Right ventricle myocardium inferior (tissue), 1 donor: ENCODE measurements at regions of chr4 and their contacts with region 1.

Region 1: DNA sequence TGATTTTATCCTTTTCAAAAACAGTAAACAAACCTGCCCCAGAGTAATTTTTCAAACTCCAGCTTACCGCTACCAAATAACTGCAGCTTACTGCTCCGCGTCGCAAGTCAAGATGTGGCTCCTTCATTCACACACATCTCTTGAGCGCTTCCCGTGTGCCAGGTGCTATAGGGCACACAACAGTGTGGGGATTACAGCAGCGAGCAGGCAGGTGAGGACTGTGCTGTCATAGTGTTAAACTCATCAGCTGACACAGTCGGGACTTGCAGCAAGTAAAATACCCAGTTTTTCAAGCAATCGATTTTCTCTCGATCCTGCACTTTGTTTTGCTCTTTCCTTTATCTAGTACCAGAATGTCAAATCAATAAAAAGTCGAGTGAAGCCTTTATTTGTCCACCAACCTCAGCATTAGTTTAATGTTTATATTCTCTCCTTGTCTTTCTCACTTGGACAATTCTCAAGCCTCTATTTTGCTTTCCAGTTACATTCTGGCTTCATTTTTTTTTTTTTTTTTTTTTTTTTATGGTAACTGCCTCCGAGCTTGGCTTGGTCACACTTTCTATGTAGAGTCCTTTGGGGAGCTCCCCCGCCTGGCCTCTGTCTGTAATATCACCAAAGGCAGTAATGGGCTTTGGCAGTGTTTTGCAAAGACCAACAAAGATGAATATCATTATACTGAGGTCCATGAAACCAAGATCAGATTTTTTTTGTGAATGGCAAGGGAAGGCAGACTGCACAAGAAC is 8.3 kb upstream of the ASB5 start:
- DNase-seq: no peak
- ATAC-seq: peak; percentile 79

Region 2: GRCh38 chr4:176150356-176150682 is 127.0 kb before region 1 on chr4:
- intact Hi-C with region 1: loop called (anchors 1 kb)
- DNase-seq: no peak
- ATAC-seq: no peak

Region 3: DNA sequence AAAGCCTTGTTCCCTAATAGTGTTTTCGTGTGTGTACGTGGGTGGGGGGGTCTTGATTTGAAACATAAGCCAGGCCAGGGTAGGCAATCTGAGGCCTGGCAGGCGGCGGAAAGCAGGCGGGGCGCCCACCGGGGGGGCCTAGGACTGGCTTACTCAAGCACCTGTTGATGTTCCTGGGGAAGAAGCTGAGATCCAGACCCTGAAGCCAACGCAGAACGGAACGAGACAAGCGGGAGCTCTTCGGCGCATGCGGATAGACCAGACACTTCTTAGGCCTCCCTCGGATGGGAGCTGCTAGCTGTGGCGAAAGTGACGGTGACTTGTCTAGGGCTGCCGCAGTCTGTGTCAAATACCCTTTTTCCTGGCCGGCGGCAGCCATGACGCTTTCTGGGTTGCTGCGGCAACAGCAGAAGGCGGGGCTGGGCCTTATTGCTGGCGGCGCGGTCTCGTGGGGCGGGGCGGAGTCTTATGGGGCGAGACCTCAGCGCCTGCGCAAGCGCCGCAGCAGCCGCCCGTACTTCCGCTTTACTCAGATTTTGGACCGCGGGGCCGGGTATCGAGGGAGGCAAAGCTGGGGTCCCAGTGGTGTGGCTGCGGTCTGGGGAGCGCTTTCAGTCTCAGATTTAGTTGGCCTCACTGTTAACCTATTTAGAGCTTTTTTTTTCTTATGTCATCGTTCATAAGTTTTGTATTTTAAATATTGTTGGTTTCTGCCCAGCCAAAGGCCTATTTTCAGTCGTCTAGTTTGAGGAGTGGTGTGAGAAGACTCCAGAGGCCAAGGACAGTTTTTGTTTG is 82.0 kb before region 1 on chr4 and contains the start of gene SPATA4:
- intact Hi-C with region 1: loop called (anchors 1 kb)
- DNase-seq: peak; percentile 98
- ATAC-seq: peak; percentile 100
- total RNA-seq, gene SPATA4: not detected

Region 4: GRCh38 chr4:176238157-176238610 is 39.1 kb before region 1 on chr4:
- intact Hi-C with region 1: loop called (anchors 5 kb)
- DNase-seq: no peak
- ATAC-seq: peak; percentile 67

Region 5: DNA sequence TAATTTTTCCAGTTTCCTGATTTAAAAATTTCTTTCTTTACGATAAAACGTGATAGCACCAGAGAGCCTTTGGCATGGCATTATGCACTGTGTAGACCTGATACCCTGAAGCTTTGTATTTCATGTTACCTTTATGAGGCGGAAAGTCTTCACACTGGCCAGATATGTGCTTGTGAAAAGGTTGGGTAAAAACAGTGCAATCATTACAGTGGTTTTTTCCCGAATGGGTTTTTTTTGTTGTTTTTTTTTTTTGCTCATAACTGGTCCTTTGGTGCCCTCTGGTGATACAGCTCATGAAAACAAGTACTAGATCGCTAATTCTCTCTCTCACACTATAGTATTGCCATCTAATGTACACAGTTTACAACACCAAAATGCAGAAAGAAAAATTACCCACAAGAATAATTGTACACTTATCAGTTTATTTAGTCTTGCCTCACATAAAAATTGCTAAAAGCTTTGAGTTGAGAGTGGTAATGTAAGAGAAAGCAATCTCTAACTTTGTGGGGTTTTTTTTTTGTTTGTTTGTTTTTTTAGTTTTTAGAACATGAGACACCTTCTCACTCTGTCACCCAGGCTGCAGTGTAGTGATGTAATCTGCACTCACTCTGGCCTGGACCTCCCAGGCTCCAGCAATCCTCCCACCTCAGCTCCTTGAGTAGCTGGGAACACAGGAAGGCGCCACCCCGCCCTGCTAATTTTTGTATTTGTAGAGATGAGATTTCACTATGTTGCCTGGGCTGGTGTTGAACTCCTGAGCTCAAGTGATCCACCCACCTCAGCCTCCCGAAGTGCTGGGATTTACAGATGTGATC is 63.7 kb after region 1 on chr4:
- intact Hi-C with region 1: loop called (anchors 5 kb)
- DNase-seq: no peak
- ATAC-seq: peak; percentile 28